WTC11 (cell line): ENCODE measurements at regions of chr7 and their contacts with region 1.

Region 1: GRCh38 chr7:12686894-12687717 is at the start of gene ARL4A:
- DNase-seq: peak; percentile 99
- ATAC-seq: peak; percentile 86
- H3K4me3 Mint-ChIP-seq: peak within 1 kb of the TSS; percentile 88
- H3K27ac Mint-ChIP-seq: peak within 1 kb of the TSS; percentile 94
- H3K4me1 Mint-ChIP-seq: peaks cover 56% of the 10 kb centered on the region
- H3K27me3 Mint-ChIP-seq: no peaks in the 10 kb centered on the region
- CTCF ChIP-seq: peak; percentile 16; the same call in 1 of the 2 replicates
- total RNA-seq, gene ARL4A: 20.9 to 25.4 TPM (median 21.9 TPM) in 3 replicates

Region 2: DNA sequence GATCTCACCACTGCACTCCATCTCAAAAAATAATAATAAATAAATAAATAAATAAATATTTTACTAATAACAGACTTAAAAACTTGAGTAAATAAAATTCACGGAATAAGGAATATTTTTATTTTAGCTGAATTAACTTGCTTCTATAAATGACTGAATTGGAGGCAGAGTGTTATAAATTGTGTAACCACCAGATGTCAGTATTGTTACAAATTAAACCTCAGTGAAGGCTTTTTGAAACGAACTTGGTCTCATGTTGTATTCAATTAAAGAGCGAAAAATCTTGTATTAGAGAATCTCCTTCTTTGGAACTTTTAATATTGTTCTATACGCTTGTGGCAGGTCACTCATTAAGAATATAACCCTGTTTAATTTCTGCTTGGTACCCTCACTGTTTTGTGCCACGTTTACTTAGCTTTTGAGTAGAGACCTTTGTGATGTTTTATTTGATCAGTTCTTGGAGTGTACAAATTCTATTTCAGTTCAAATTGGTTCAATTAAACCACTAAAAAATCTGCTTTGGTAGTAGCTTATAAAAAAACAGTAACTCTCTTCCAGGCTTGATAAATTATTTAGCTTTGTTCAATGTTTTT is 162.2 kb before region 1 on chr7:
- CTCF ChIA-PET with region 1: interaction called, 21 read pairs
- POLR2A ChIA-PET with region 1: no interaction called
- DNase-seq: no peak
- ATAC-seq: peak; percentile 48; the same call in 1 of the 2 replicates
- H3K4me3 Mint-ChIP-seq: no peak overlapping the region
- H3K27ac Mint-ChIP-seq: no peak overlapping the region
- H3K4me1 Mint-ChIP-seq: peaks cover 7% of the 10 kb centered on the region
- H3K27me3 Mint-ChIP-seq: no peaks in the 10 kb centered on the region
- CTCF ChIP-seq: peak; percentile 47; the same call in 1 of the 2 replicates

Region 3: GRCh38 chr7:12674849-12675248 is 12.3 kb before region 1 on chr7:
- CTCF ChIA-PET with region 1: interaction called, 32 read pairs
- POLR2A ChIA-PET with region 1: no interaction called
- DNase-seq: no peak
- ATAC-seq: peak; percentile 83
- H3K4me3 Mint-ChIP-seq: no peak overlapping the region
- H3K27ac Mint-ChIP-seq: no peak overlapping the region
- H3K4me1 Mint-ChIP-seq: no peaks in the 10 kb centered on the region
- H3K27me3 Mint-ChIP-seq: no peaks in the 10 kb centered on the region
- CTCF ChIP-seq: no peak

Region 4: GRCh38 chr7:12729112-12729511 is 42.0 kb after region 1 on chr7:
- CTCF ChIA-PET with region 1: interaction called, 28 read pairs
- POLR2A ChIA-PET with region 1: no interaction called
- DNase-seq: peak; percentile 74
- ATAC-seq: peak; percentile 97
- H3K4me3 Mint-ChIP-seq: no peak overlapping the region
- H3K27ac Mint-ChIP-seq: peak overlapping the region; percentile 97
- H3K4me1 Mint-ChIP-seq: peaks cover 49% of the 10 kb centered on the region
- H3K27me3 Mint-ChIP-seq: no peaks in the 10 kb centered on the region
- CTCF ChIP-seq: no peak

Region 5: GRCh38 chr7:12820777-12821176 is 133.7 kb after region 1 on chr7:
- CTCF ChIA-PET with region 1: no interaction called
- POLR2A ChIA-PET with region 1: no interaction called
- DNase-seq: no peak
- ATAC-seq: peak; percentile 85
- H3K4me3 Mint-ChIP-seq: 0 out of 2 replicates have a peak overlapping the region, but pooled peaks have one; percentile 0
- H3K27ac Mint-ChIP-seq: peak overlapping the region; percentile 79
- H3K4me1 Mint-ChIP-seq: peaks cover 41% of the 10 kb centered on the region
- H3K27me3 Mint-ChIP-seq: no peaks in the 10 kb centered on the region
- CTCF ChIP-seq: no peak

Region 6: DNA sequence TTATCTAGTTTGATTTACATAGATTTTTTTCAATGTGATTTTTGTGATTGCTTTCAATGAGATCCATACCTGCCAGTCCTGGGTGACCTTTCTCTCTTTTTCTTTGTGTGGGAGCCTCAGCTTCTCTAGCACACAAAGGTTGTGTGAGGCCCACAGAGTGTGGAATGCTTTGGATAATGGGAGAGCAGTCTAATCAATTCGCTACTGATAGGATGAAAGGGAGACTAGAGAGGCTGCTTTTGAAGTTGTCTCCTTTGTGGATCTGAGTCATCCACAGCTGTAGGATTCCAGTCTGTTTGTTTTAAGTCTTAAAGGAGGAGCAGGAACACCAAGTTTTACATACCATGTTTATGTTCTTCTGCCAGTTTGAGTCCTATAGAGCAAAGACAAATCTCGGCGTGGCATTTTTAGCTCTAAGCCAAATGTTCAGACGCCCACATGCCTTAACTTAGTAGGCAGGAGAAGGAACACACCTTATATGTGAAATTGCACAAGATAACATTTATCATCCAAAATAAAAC is 330.3 kb after region 1 on chr7:
- CTCF ChIA-PET with region 1: interaction called, 18 read pairs
- POLR2A ChIA-PET with region 1: no interaction called
- DNase-seq: no peak
- ATAC-seq: peak; percentile 86
- H3K4me3 Mint-ChIP-seq: no peak overlapping the region
- H3K27ac Mint-ChIP-seq: no peak overlapping the region
- H3K4me1 Mint-ChIP-seq: peaks cover 42% of the 10 kb centered on the region
- H3K27me3 Mint-ChIP-seq: no peaks in the 10 kb centered on the region
- CTCF ChIP-seq: no peak

Region 7: DNA sequence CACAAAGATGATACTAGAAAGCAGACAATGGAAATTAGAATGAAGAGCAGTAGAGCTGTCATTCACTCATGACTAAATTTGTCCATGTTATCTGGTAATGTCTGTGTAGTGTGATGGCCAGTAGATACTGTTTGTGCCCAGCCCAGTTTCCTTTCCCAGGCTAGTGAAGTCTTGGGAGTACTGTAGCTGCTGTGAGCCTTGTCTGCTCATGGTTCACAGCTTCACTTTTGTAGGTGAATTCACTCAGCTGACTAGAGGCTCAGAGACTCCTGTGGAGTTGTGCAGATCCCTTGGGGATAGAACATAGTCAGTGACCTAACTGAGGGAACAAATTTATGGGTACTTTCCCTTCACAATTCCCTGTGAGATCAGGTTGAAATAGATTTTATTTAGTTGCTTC is 572.8 kb after region 1 on chr7:
- CTCF ChIA-PET with region 1: interaction called, 19 read pairs
- POLR2A ChIA-PET with region 1: no interaction called
- DNase-seq: no peak
- ATAC-seq: no peak
- H3K4me3 Mint-ChIP-seq: no peak overlapping the region
- H3K27ac Mint-ChIP-seq: no peak overlapping the region
- H3K4me1 Mint-ChIP-seq: no peaks in the 10 kb centered on the region
- H3K27me3 Mint-ChIP-seq: no peaks in the 10 kb centered on the region
- CTCF ChIP-seq: no peak